ENCODE measurements at regions of chr7 and their contacts with region 1.

Region 1: DNA sequence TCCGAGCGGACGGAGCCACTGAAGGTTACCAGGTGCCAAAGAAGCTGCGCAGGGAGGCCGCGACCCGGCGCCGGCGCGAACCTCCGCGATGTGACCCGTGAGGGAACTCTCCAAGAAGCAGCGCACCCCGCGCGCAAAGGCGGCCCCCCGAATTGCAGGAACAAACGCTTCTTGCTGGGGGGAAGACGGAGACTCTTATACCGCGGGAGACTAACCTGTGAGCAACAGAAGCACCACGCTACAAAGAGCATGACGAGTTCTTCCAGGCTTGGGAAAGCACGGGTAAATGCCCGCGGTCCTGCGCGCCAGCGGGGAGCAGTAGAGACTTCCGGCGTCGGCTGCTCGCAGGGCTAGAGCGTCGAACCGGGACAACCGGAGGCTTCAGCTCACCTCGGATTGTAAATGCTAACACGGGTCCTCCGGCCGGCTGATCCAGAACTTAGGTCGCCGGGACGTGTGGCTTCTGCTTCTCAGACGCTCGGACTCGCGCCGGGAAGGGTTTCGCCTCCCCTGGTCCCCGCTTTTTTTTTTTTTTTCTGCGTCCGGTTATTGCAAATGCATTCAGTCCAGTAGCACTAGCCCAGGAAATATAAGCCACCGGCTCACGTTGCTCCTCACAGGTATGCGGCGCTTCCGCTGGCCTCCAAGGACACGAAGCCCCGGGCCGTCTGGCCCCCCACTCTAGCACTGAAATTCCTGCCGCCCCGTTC is at the start of gene COA1:
- DNase-seq: peak; percentile 91
- ATAC-seq: peak; percentile 95
- H3K4me3 ChIP-seq: peak within 1 kb of the TSS; percentile 95
- H3K27ac ChIP-seq: peak within 1 kb of the TSS; percentile 53
- H3K4me1 ChIP-seq: peaks cover 18% of the 10 kb centered on the region; the same call in 1 of the 2 replicates
- H3K27me3 ChIP-seq: no peaks in the 10 kb centered on the region
- CTCF ChIP-seq: no peak
- total RNA-seq, gene COA1: 65.8 and 82.0 TPM in 2 replicates

Region 2: DNA sequence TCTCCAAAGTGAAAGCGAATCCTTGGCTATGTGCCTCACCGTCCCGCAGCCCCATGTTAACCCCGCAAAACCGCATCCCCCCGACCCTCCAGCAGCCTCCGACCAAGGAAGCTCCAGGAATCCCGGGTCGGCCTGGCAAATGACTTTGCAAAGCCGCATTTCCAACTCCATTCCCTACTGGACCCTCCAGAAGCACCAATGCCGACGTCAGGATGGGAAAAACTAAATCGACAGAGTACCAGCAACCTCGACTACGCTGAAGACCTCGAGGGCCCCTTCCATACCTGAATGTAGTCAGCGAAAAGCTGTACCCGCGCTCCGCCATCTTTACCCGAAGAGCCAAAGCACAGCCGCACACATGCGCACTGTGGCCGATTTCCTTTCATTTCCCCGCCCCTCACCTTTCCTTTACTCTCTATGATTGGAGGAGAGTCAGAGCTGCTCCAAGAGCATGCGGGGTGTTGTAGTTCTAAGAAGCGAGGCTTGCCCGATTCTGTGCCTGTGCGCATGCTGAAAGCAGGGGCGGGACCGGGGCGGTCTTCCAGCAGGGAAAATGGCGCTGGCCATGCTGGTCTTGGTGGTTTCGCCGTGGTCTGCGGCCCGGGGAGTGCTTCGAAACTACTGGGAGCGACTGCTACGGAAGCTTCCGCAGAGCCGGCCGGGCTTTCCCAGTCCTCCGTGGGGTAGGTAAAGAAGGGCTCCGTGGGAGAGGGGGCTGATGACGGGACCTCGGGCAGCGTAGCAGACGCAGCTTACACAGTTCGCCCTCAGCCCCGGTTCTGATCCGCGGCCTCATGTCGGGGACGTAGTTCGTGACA is 797.3 kb before region 1 on chr7 and contains the starts of genes MRPL32 and PSMA2:
- CTCF ChIA-PET with region 1: no interaction called
- POLR2A ChIA-PET with region 1: no interaction called
- intact Hi-C with region 1: loop called (anchors 10 kb)
- DNase-seq: peak; percentile 97
- ATAC-seq: peak; percentile 99
- H3K4me3 ChIP-seq: peak within 1 kb of the TSS; percentile 96
- H3K27ac ChIP-seq: peak within 1 kb of the TSS; percentile 38
- H3K4me1 ChIP-seq: peaks cover 21% of the 10 kb centered on the region
- H3K27me3 ChIP-seq: no peaks in the 10 kb centered on the region
- CTCF ChIP-seq: no peak
- total RNA-seq, gene MRPL32: 75.4 and 104 TPM in 2 replicates
- total RNA-seq, gene PSMA2: 69.7 and 85.6 TPM in 2 replicates

Region 3: GRCh38 chr7:43750016-43750887 is 20.9 kb after region 1 on chr7:
- CTCF ChIA-PET with region 1: no interaction called
- POLR2A ChIA-PET with region 1: interaction called, 10 read pairs
- intact Hi-C with region 1: no loop called
- DNase-seq: no peak
- ATAC-seq: no peak
- H3K4me3 ChIP-seq: no peak overlapping the region
- H3K27ac ChIP-seq: no peak overlapping the region
- H3K4me1 ChIP-seq: peaks cover 7% of the 10 kb centered on the region; the same call in 1 of the 2 replicates
- H3K27me3 ChIP-seq: no peaks in the 10 kb centered on the region
- CTCF ChIP-seq: no peak

Region 4: DNA sequence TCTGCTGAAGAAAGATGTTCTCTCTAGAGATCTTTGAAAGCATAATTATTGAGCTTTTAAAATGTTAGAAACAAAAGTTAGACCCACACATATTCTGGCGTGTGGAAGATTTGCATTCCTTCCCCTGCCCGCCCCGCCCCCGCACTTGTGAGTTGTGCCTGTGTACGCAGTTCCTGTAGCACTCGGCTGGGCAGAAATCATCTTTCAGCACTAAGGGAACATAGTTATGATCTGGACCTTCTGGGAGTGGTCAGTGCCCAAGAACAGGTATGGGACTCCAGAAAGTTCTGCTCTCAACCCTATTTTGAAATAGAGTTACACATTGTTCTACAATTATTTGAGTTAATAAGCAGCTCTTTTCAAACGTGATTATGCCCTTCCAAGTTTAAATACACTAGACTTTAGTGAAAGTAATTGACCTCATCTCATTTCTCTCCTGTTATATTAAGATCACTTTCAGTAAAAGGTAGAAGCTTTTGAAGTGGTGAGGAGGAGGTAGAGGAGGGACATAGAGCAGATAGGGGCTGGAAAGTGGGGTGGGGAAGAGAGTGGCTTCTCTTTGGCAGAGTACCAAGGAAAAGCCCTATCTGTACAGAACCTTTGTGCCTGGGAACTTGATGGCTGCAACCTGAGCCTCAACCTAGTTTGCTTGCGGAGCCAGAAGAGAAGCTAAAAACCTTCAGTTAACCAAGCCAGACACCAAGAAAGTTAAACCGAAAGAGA is 34.8 kb after region 1 on chr7:
- CTCF ChIA-PET with region 1: no interaction called
- POLR2A ChIA-PET with region 1: no interaction called
- intact Hi-C with region 1: loop called (anchors 2 kb)
- DNase-seq: peak; percentile 57
- ATAC-seq: peak; percentile 56
- H3K4me3 ChIP-seq: peak overlapping the region; percentile 45
- H3K27ac ChIP-seq: peak overlapping the region; percentile 55
- H3K4me1 ChIP-seq: peaks cover 47% of the 10 kb centered on the region
- H3K27me3 ChIP-seq: no peaks in the 10 kb centered on the region
- CTCF ChIP-seq: no peak

Region 5: DNA sequence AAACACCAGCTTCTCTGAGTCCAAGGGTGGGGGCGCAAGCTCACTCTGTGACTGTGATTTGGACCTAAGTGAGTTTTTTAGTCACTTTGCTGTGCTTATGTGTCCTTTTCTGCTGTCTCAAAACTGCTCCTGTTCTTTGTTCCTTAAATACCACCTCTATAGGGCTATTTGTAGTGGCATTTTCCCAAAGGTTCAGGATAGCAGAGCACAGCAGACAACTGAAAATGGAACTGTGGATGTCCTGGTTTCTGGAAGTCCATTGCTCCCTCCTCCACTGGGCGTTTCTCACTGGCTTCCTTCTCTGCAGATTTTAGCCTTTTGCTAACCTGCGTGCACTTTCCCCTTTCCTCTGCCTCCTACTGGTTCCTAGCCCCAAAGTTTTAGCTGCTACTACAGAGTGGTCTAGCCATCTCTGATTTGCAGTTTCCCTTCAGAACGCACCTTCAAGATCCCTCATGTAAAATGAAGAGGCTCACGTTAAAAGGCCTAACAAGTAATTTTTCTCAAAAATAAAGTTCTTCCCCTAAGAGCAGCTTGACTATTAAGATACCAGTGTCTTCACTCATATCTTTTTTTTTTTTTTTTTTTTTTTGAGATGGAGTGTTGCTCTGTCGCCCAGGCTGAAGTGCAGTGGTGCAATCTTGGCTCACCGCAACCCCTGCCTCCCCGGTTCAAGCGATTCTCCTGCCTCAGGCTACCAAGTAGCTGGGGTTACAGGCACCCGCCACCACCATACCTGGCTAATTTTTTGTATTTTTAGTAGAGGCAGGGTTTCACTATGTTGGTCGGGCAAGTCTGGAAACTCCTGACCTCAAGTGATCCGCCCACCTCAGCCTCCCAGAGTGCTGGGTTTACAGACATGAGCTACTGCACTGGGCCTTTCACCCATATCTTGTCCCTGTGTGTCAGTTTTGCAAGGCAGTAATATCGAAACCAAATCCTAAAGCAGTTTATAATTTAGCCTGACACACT is 54.9 kb after region 1 on chr7:
- CTCF ChIA-PET with region 1: no interaction called
- POLR2A ChIA-PET with region 1: no interaction called
- intact Hi-C with region 1: no loop called
- DNase-seq: no peak
- ATAC-seq: peak; percentile 32
- H3K4me3 ChIP-seq: no peak overlapping the region
- H3K27ac ChIP-seq: no peak overlapping the region
- H3K4me1 ChIP-seq: peaks cover 12% of the 10 kb centered on the region
- H3K27me3 ChIP-seq: no peaks in the 10 kb centered on the region
- CTCF ChIP-seq: no peak

Region 6: DNA sequence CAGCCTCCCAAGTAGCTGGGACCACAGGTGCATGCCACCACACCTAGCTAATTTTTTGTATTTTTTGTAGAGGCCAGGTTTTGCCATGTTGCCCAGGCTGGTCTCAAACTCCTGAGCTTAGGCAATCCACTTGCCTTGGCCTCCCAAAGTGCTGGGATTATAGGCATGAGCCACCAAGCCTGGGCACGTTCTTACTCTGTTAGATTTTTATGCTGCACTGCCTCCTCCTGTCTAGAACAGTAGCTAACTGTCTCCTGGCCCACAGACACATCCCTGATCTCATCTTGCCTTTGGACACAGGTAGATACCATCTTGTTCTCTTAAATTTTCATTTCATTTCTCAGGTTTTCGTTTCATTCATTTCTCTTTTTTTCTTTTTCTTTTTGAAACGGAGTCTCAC is 70.2 kb after region 1 on chr7:
- CTCF ChIA-PET with region 1: interaction called, 3 read pairs
- POLR2A ChIA-PET with region 1: no interaction called
- intact Hi-C with region 1: loop called (anchors 2 kb)
- DNase-seq: peak; percentile 23
- ATAC-seq: peak; percentile 50
- H3K4me3 ChIP-seq: no peak overlapping the region
- H3K27ac ChIP-seq: no peak overlapping the region
- H3K4me1 ChIP-seq: no peaks in the 10 kb centered on the region
- H3K27me3 ChIP-seq: no peaks in the 10 kb centered on the region
- CTCF ChIP-seq: peak; percentile 32; the same call in 1 of the 2 replicates

Region 7: GRCh38 chr7:43834463-43835251 is 105.3 kb after region 1 on chr7:
- CTCF ChIA-PET with region 1: interaction called, 3 read pairs
- POLR2A ChIA-PET with region 1: no interaction called
- intact Hi-C with region 1: loop called (anchors 1 kb)
- DNase-seq: peak; percentile 46
- ATAC-seq: no peak
- H3K4me3 ChIP-seq: no peak overlapping the region
- H3K27ac ChIP-seq: no peak overlapping the region
- H3K4me1 ChIP-seq: 0 out of 2 replicates have a peak, but pooled peaks cover 3% of the 10 kb centered on the region
- H3K27me3 ChIP-seq: no peaks in the 10 kb centered on the region
- CTCF ChIP-seq: no peak

Measured in PC-3 (cell line).